ENCODE measurements at regions of chr17 and their contacts with region 1.

Region 1: GRCh38 chr17:35063514-35064223 is at the start of gene RFFL:
- DNase-seq: peak; percentile 58 to 85
- ATAC-seq: peak; percentile 96 to 100 (median 99)
- H3K4me3 ChIP-seq: peak within 1 kb of the TSS in 8 of 10 donors; percentile 18 to 41 (median 34)
- H3K27ac ChIP-seq: peak within 1 kb of the TSS; percentile 3 to 92 (median 68)
- H3K4me1 ChIP-seq: peaks cover 0 to 41% (median 12%) of the 10 kb centered on the region in 9 donors
- H3K27me3 ChIP-seq: no peaks in the 10 kb centered on the region
- CTCF ChIP-seq: peak in 5 of 9 donors; percentile 27 to 53 (median 46)
- total RNA-seq, gene RFFL: 9.2 to 19.3 (median 13.9) TPM

Region 2: DNA sequence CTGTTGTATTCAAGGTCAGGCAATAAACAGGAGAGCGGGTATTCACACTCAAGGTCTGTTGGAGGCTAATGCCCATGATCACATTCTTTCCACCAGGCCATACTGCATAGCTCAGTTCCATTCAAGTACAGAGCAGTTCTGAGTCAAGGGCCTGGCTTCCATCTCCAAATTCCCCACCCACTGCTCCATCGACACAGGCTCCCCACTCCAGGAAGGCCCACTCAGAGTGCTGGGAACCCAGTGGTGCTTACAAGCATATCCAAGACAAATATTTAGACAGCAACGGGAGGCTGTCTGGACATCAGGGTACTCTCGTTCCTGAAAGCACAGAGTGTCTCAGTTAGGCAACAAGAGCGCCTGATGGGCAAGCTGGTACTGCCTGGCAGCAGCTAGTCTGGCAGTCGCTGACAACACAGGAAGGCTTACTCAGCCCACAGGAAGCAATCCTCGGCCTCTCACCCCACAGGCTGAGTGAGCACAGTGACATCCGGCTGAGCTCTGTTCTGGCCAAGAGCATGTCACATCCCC is 41.1 kb before region 1 on chr17:
- intact Hi-C with region 1: loop called in 3 of 10 experiments (anchors 5 kb)
- DNase-seq: peak; percentile 52 to 71
- ATAC-seq: peak; percentile 85 to 96 (median 94)
- H3K4me3 ChIP-seq: no peak overlapping the region
- H3K27ac ChIP-seq: peak overlapping the region; percentile 49 to 90 (median 78)
- H3K4me1 ChIP-seq: peaks cover 0 to 33% (median 18%) of the 10 kb centered on the region in 9 donors
- H3K27me3 ChIP-seq: no peaks in the 10 kb centered on the region
- CTCF ChIP-seq: peak in 1 of 9 donors; percentile 22

Measured in heart right ventricle (tissue), 16 donors.